MCF 10A (cell line): ENCODE measurements at regions of chr10 and their contacts with region 1.

Region 1: GRCh38 chr10:61835069-61835945 is 66.2 kb upstream of the ARID5B start:
- DNase-seq: peak; percentile 70
- H3K4me3 Mint-ChIP-seq: no peak overlapping the region
- H3K27ac Mint-ChIP-seq: peak overlapping the region; percentile 83
- H3K4me1 Mint-ChIP-seq: peaks cover 31% of the 10 kb centered on the region
- H3K27me3 Mint-ChIP-seq: no peaks in the 10 kb centered on the region
- CTCF ChIP-seq: peak; percentile 50

Region 2: DNA sequence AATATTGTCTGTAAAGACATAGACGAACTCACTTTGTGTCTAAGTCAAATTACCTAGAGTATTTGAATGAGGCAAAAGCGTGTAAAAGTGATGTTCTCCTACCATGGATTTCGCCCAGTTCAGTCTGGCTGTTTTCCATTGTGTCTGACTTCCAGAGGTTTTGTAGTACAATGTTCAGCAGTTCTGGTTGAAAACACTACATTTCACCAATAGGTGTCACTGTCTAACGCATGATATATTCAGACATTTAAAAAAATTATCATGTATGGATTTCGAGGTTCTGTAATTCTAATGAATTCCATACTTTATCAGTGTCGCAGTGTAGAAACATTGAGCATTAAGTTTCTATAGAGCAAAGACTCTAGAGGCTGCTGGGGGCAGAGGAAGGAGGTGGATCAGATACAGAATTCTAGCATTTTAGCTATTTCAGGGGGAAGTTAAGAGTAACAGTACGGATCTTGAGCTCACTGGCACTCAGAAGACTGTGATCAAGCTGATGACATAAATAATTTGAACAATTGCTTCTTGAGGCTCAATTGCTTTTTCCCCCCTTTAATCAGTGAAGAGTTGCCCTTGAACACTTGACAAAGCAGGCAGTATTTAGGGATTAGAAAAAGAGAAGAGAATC is 694.4 kb before region 1 on chr10:
- CTCF ChIA-PET with region 1: interaction called, 3 read pairs
- POLR2A ChIA-PET with region 1: no interaction called
- intact Hi-C with region 1: loop called (anchors 10 kb)
- DNase-seq: peak; percentile 70
- H3K4me3 Mint-ChIP-seq: no peak overlapping the region
- H3K27ac Mint-ChIP-seq: no peak overlapping the region
- H3K4me1 Mint-ChIP-seq: peaks cover 11% of the 10 kb centered on the region
- H3K27me3 Mint-ChIP-seq: no peaks in the 10 kb centered on the region
- CTCF ChIP-seq: peak; percentile 62

Region 3: GRCh38 chr10:61271127-61271823 is 564.0 kb before region 1 on chr10:
- CTCF ChIA-PET with region 1: no interaction called
- POLR2A ChIA-PET with region 1: no interaction called
- intact Hi-C with region 1: loop called (anchors 2 kb)
- DNase-seq: peak; percentile 47
- H3K4me3 Mint-ChIP-seq: no peak overlapping the region
- H3K27ac Mint-ChIP-seq: peak overlapping the region; percentile 39
- H3K4me1 Mint-ChIP-seq: peaks cover 10% of the 10 kb centered on the region
- H3K27me3 Mint-ChIP-seq: no peaks in the 10 kb centered on the region
- CTCF ChIP-seq: peak; percentile 27

Region 4: GRCh38 chr10:61635931-61636330 is 199.4 kb before region 1 on chr10:
- CTCF ChIA-PET with region 1: no interaction called
- POLR2A ChIA-PET with region 1: interaction called, 12 read pairs
- intact Hi-C with region 1: no loop called
- DNase-seq: peak; percentile 75
- H3K4me3 Mint-ChIP-seq: no peak overlapping the region
- H3K27ac Mint-ChIP-seq: peak overlapping the region; percentile 93
- H3K4me1 Mint-ChIP-seq: peaks cover 33% of the 10 kb centered on the region
- H3K27me3 Mint-ChIP-seq: no peaks in the 10 kb centered on the region
- CTCF ChIP-seq: no peak

Region 5: GRCh38 chr10:61750929-61751471 is 84.3 kb before region 1 on chr10:
- CTCF ChIA-PET with region 1: interaction called, 40 read pairs
- POLR2A ChIA-PET with region 1: interaction called, 10 read pairs
- intact Hi-C with region 1: loop called (anchors 1 kb)
- DNase-seq: peak; percentile 68
- H3K4me3 Mint-ChIP-seq: no peak overlapping the region
- H3K27ac Mint-ChIP-seq: peak overlapping the region; percentile 86
- H3K4me1 Mint-ChIP-seq: peaks cover 31% of the 10 kb centered on the region
- H3K27me3 Mint-ChIP-seq: no peaks in the 10 kb centered on the region
- CTCF ChIP-seq: peak; percentile 47

Region 6: GRCh38 chr10:61869774-61870525 is 34.6 kb after region 1 on chr10:
- CTCF ChIA-PET with region 1: no interaction called
- POLR2A ChIA-PET with region 1: no interaction called
- intact Hi-C with region 1: no loop called
- DNase-seq: peak; percentile 6
- H3K4me3 Mint-ChIP-seq: no peak overlapping the region
- H3K27ac Mint-ChIP-seq: no peak overlapping the region
- H3K4me1 Mint-ChIP-seq: no peaks in the 10 kb centered on the region
- H3K27me3 Mint-ChIP-seq: no peaks in the 10 kb centered on the region
- CTCF ChIP-seq: no peak

Region 7: DNA sequence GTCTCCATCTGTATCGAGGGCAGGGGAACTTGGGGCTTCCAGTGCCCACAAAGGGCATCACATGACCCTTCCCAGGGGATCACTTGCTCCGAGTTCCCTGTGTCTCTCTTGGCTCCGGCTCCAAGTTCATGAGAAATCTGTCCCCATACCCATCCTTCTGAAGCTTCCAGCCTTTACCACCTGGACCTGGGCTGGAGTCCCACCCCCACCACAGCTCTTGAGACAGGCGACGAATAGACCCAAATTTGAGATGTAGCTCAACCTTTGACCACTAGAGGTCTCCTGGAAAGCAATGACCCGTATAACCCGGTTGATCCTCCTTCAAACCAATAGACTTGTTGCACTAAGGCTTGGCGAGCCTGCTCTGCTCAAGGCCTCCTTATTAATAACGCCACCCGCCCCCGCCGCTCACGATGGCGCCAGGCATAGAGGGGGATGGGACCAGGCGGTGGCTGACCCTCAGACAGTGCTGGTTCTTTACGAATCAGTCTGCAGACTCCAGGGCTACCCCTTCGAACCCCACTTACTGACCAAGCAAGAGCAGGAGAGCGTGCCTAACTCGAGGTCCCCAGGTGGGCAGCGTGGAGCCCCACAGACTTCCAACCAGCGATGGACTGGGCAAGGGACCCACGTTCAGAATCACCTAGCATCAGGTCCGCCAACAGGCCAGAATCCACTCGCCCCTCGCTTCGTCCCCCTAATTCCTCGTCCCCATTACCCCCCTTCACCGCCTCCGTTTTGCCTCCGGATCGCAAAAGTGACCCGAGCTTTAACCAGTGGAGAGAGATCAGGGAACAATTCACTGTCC is 61.8 kb after region 1 on chr10:
- CTCF ChIA-PET with region 1: interaction called, 12 read pairs
- POLR2A ChIA-PET with region 1: interaction called, 118 read pairs
- intact Hi-C with region 1: loop called (anchors 2 kb)
- DNase-seq: peak; percentile 80
- H3K4me3 Mint-ChIP-seq: peak overlapping the region; percentile 50
- H3K27ac Mint-ChIP-seq: no peak overlapping the region
- H3K4me1 Mint-ChIP-seq: peaks cover 33% of the 10 kb centered on the region
- H3K27me3 Mint-ChIP-seq: no peaks in the 10 kb centered on the region
- CTCF ChIP-seq: peak; percentile 50